ENCODE measurements at regions of chr5 and their contacts with region 1.

Region 1: GRCh38 chr5:65481635-65482295 is at the start of gene ADAMTS6:
- DNase-seq: peak; percentile 49 to 64
- H3K4me3 ChIP-seq: peak within 1 kb of the TSS; percentile 35
- H3K4me3 Mint-ChIP-seq: no peak within 1 kb of the TSS
- H3K27ac Mint-ChIP-seq: no peak within 1 kb of the TSS
- H3K4me1 ChIP-seq: peaks cover 5% of the 10 kb centered on the region
- H3K4me1 Mint-ChIP-seq: no peaks in the 10 kb centered on the region
- H3K27me3 ChIP-seq: no peaks in the 10 kb centered on the region
- H3K27me3 Mint-ChIP-seq: no peaks in the 10 kb centered on the region
- CTCF ChIP-seq: no peak
- total RNA-seq, gene ADAMTS6: 0.23 and 0.67 TPM in 2 replicates

Region 2: DNA sequence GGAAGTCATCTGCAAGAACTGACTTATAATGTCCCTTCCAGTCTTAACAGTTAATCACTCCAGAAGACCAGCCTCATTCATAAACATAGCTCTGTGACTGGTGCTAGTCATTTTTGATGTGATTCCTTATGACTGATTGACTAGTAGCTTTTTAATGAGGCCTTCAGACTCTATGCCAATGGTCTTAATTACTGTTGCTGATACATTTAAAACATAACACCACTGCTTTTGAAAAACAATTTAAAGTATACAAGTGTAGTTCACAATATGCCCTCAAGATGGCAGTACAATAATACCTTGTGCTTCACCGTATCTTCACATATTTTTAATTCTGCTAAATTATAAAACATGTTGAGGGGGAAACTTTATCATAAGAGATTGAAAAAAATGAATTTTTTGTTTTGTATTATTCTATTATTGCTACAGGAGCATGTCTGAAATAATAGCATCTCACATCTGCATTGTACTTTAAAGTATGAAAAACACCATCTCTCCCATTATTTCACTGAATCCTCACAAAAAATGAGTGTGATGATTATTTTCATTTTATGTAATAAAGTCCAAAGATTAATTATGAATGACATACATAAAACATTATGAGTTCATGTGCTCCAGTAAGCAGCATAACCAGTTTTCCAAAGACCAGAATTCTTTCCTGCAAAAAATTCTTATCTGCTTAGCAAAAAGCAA is 846.6 kb before region 1 on chr5:
- CTCF ChIA-PET with region 1: interaction called, 3 read pairs
- POLR2A ChIA-PET with region 1: no interaction called
- intact Hi-C with region 1: loop called (anchors 5 kb)
- DNase-seq: peak in 1 of 2 experiments; percentile 21
- H3K4me3 ChIP-seq: no peak overlapping the region
- H3K4me3 Mint-ChIP-seq: no peak overlapping the region
- H3K27ac Mint-ChIP-seq: no peak overlapping the region
- H3K4me1 ChIP-seq: no peaks in the 10 kb centered on the region
- H3K4me1 Mint-ChIP-seq: no peaks in the 10 kb centered on the region
- H3K27me3 ChIP-seq: no peaks in the 10 kb centered on the region
- H3K27me3 Mint-ChIP-seq: peaks cover 9% of the 10 kb centered on the region
- CTCF ChIP-seq: peak; percentile 48 to 88

Region 3: DNA sequence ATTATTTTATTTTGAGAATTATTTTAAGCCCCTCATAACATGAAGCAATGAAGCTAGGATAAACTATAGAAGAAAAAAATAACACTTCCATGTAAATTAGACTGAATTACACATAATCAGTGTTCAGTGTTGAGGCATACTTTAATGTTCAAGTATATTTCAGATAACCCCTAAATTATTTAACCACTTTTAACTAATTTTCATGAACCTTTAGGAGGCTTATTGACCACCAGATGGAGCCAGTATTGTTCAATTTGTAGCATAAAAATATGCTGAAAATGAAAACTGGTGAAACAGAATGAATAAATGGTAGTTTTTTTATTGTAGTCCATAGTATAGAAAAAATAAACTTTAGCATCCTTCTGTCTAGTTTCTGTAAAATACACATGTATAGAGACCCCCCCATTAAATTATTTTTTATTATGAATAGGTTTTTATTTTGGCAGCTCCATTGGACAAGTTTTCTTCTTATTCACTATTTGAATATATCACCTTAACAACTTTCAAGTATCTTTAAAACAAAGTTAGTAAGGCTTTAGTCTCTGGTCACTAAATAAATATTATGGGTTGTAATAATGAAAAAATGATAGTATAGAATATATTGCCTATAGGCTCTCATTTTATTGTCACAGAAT is 522.9 kb before region 1 on chr5:
- CTCF ChIA-PET with region 1: no interaction called
- POLR2A ChIA-PET with region 1: no interaction called
- intact Hi-C with region 1: loop called (anchors 1 kb)
- DNase-seq: no peak
- H3K4me3 ChIP-seq: no peak overlapping the region
- H3K4me3 Mint-ChIP-seq: no peak overlapping the region
- H3K27ac Mint-ChIP-seq: no peak overlapping the region
- H3K4me1 ChIP-seq: peaks cover 19% of the 10 kb centered on the region
- H3K4me1 Mint-ChIP-seq: peaks cover 13% of the 10 kb centered on the region
- H3K27me3 ChIP-seq: no peaks in the 10 kb centered on the region
- H3K27me3 Mint-ChIP-seq: no peaks in the 10 kb centered on the region
- CTCF ChIP-seq: peak; percentile 40 to 48

Region 4: DNA sequence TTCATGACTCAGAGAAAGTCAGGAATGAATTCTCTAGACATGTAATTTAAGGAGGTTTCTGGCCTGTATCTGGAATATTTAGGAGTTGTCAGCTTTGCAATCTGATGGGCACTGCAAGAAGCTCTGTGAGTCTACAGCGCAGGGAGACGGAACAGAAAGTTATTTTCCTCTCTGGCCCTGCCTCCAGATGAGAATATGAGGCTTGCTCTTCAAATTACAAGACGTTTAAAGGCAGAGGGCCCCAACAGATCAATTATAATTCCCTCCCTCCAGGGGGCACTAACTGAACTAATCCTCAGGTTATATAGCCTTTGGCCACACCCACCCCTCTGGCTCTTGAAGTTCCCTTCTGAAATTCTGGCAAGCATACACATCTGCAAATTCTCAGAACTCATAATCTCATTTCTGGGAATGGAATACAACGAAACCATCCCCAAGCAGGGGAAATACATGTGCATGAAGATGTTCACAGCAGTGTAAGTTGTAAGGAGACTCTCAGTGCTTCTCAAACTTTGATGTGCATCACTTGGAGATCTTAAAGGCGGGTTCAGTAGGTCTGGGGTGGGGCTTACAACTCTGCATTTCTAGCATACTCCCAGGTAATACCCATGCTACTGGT is 405.4 kb before region 1 on chr5:
- CTCF ChIA-PET with region 1: interaction called, 4 read pairs
- POLR2A ChIA-PET with region 1: no interaction called
- intact Hi-C with region 1: loop called (anchors 10 kb)
- DNase-seq: peak; percentile 56 to 61
- H3K4me3 ChIP-seq: no peak overlapping the region
- H3K4me3 Mint-ChIP-seq: no peak overlapping the region
- H3K27ac Mint-ChIP-seq: no peak overlapping the region
- H3K4me1 ChIP-seq: peaks cover 7% of the 10 kb centered on the region; the same call in 1 of the 2 replicates
- H3K4me1 Mint-ChIP-seq: no peaks in the 10 kb centered on the region
- H3K27me3 ChIP-seq: peaks cover 1% of the 10 kb centered on the region; the same call in 1 of the 2 replicates
- H3K27me3 Mint-ChIP-seq: no peaks in the 10 kb centered on the region
- CTCF ChIP-seq: peak; percentile 8 to 15

Region 5: GRCh38 chr5:65394087-65394486 is 87.7 kb before region 1 on chr5:
- CTCF ChIA-PET with region 1: interaction called, 3 read pairs
- POLR2A ChIA-PET with region 1: no interaction called
- intact Hi-C with region 1: loop called (anchors 5 kb)
- DNase-seq: peak in 1 of 2 experiments; percentile 2
- H3K4me3 ChIP-seq: no peak overlapping the region
- H3K4me3 Mint-ChIP-seq: no peak overlapping the region
- H3K27ac Mint-ChIP-seq: no peak overlapping the region
- H3K4me1 ChIP-seq: no peaks in the 10 kb centered on the region
- H3K4me1 Mint-ChIP-seq: no peaks in the 10 kb centered on the region
- H3K27me3 ChIP-seq: no peaks in the 10 kb centered on the region
- H3K27me3 Mint-ChIP-seq: peaks cover 6% of the 10 kb centered on the region
- CTCF ChIP-seq: no peak

Region 6: DNA sequence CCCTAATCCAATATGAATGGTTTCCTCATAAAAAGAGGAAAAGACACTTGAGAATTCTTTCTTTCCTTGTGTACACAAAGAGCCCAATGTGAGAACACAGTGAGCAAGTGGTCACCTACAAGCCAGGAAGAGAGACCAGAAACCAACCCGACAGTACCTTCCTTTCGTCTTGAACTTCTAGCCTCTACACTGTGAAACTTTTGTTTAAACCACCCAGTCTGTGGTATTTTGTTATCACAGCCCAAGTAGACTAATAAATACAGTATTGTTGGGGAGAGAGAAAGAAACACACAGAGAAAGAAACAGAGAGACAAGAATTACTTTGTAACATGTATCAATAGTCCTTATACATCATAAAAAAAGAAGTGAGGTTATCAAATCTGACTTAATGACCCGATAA is 44.0 kb after region 1 on chr5:
- CTCF ChIA-PET with region 1: no interaction called
- POLR2A ChIA-PET with region 1: no interaction called
- intact Hi-C with region 1: no loop called
- DNase-seq: no peak
- H3K4me3 ChIP-seq: no peak overlapping the region
- H3K4me3 Mint-ChIP-seq: no peak overlapping the region
- H3K27ac Mint-ChIP-seq: no peak overlapping the region
- H3K4me1 ChIP-seq: no peaks in the 10 kb centered on the region
- H3K4me1 Mint-ChIP-seq: no peaks in the 10 kb centered on the region
- H3K27me3 ChIP-seq: no peaks in the 10 kb centered on the region
- H3K27me3 Mint-ChIP-seq: no peaks in the 10 kb centered on the region
- CTCF ChIP-seq: no peak

Measured in Caco-2 (cell line).